Mucosa of descending colon (tissue), 3 donors: ENCODE measurements at regions of chr12 and their contacts with region 1.

Region 1: GRCh38 chr12:64256166-64256800 is 34.2 kb upstream of the KICS2 start:
- DNase-seq: peak in 1 of 3 donors; percentile 55
- ATAC-seq: peak; percentile 43
- H3K4me3 ChIP-seq: no peak overlapping the region
- H3K4me1 ChIP-seq: no peaks in the 10 kb centered on the region
- CTCF ChIP-seq: peak; percentile 29

Region 2: DNA sequence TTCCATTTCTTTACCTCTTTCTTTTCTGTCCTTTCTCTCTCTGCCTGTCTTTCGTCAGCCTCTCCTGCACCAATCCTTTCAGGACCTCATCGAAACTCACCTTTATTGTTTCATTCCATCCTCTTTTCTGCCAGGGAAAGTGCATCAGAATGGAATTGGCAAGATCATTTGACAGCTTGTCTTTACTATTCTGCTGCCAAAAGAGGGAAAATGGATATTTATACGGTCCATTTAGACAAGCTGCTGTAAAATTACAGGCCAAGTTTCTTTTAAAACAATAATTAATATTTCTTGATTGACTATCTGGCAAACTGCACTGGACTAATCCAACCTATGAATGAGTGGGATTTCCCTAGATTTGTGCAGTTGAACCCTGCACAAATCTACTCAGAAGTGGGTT is 419.3 kb before region 1 on chr12:
- intact Hi-C with region 1: loop called (anchors 5 kb)
- DNase-seq: no peak
- ATAC-seq: no peak
- H3K4me3 ChIP-seq: no peak overlapping the region
- H3K4me1 ChIP-seq: no peaks in the 10 kb centered on the region
- CTCF ChIP-seq: no peak